Sciatic nerve (tissue), 2 donors: ENCODE measurements at regions of chr19 and their contacts with region 1.

Region 1: GRCh38 chr19:6516659-6517291 is 14.1 kb upstream of the TNFSF9 start:
- DNase-seq: peak; percentile 94
- ATAC-seq: peak; percentile 94

Region 2: DNA sequence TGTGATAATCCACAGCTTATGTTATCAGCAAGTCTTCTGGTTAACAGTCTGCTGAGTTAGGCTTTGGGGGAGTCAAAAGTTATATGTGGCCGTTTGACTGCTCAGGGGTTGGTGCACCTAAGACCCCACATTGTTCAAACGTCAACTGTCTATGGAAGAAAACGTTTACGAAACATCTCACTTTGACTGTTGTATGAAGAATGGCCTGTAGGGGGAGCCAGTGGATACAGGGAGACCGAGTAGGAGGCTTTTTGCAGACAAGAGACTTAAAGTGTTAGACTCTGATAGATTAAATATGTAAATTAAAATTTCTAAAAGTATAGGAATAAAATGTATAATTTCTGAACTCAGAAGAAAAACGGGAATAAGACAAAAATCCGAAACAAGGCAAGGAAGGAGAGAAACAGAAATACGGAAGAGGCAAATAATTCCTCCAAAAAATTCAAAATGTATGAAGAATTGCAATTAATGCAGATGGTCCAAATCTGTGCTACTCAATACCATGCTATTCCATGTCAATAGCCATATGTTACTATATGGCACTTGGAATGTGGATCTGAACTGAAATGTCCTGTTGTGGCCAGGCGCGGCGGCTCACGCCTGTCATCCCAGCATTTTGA is 115.3 kb after region 1 on chr19:
- intact Hi-C with region 1: loop called (anchors 2 kb)
- DNase-seq: peak; percentile 79
- ATAC-seq: peak; percentile 77

Region 3: DNA sequence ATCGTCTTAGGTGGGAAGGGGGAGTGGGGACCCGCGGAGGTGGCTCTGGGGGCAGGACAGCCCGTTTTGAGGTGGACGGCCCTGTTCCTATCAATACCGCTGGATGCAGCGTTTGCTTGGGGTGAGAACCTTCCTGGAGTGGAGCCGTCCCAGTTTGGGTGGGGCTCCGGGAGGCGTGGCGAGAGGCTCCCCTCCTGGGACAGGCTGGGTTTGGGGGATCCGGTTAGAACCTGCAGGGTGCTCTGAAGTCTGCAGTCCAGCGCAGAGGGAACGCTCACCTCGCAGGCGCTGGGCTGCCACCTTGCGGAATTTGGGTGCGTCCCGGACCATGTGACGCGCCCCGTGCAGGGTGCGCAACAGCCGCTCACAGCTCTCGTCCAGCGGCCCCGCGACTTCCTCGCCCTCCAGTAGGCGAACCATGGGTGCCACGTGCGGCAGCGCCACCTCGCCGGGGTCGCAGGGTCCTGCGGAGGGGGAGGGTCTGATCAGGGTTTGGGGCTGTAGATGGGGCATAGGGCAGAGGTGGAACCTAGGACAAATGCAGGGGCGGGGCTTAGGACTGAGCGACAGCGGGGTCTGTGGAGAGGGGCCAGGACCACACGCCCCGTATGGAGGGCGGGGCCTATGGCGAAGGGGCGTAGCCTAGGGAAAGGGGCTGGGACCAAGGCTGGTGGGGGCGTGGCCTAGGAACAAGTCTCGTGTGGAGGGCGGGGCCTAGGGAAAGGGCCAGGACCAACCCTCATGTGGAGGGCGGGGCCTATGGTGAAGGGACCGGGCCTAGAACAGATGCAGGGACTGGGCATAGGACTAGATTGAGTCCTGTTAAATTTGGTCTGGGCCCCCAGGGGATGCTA is 236.6 kb after region 1 on chr19:
- intact Hi-C with region 1: no loop called
- DNase-seq: peak; percentile 88
- ATAC-seq: peak; percentile 90